ENCODE measurements at regions of chr2 and their contacts with region 1.

Region 1: DNA sequence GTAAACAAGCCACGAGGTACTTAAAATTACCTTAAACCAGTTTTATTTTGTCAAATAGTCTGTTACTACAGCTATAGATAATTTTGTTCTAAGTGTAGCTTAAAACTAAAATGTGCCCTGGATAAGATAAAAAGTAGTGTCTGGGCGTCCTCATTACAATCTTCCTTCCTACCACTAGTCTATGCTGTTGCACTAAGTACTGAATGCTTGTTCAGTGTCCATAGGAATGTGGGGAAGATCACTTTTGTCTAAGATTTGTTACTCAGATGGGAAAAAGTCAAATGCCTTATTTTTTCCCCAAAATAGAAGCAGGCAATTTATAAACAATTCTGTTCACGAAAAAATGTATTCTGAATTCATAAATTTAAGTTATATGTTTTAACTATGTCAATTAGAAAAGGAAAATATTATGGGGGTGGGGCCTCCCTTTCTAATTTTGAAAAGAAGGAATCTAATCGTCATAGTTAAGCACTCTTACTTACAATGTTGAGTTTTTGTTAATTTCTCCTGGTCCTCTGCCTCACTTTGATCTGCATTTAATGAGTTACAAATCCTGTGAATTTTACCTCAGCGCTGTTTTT is 140.4 kb upstream of the VRK2 start:
- DNase-seq: no peak
- ATAC-seq: peak; percentile 98
- H3K4me3 ChIP-seq: no peak overlapping the region
- H3K27ac ChIP-seq: no peak overlapping the region
- H3K4me1 ChIP-seq: no peaks in the 10 kb centered on the region
- H3K27me3 ChIP-seq: no peaks in the 10 kb centered on the region
- CTCF ChIP-seq: peak; percentile 81 to 92 (median 84)
- POLR2A ChIP-seq: no peak
- RAD21 ChIP-seq: peak; percentile 95

Region 2: GRCh38 chr2:57759822-57760300 is 146.4 kb before region 1 on chr2:
- CTCF ChIA-PET with region 1: interaction called, 5 read pairs
- POLR2A ChIA-PET with region 1: no interaction called
- RAD21 ChIA-PET with region 1: no interaction called
- intact Hi-C with region 1: loop called (anchors 5 kb)
- DNase-seq: peak; percentile 57
- ATAC-seq: peak; percentile 99
- H3K4me3 ChIP-seq: peak overlapping the region in 1 of 2 experiments; percentile 28; a peak in 2 of 4 replicates
- H3K27ac ChIP-seq: no peak overlapping the region
- H3K4me1 ChIP-seq: peaks cover 0 to 8% of the 10 kb centered on the region in 2 experiments; a peak in 2 of 4 replicates
- H3K27me3 ChIP-seq: no peaks in the 10 kb centered on the region
- CTCF ChIP-seq: peak; percentile 75 to 92 (median 87)
- POLR2A ChIP-seq: no peak
- RAD21 ChIP-seq: peak; percentile 96

Region 3: DNA sequence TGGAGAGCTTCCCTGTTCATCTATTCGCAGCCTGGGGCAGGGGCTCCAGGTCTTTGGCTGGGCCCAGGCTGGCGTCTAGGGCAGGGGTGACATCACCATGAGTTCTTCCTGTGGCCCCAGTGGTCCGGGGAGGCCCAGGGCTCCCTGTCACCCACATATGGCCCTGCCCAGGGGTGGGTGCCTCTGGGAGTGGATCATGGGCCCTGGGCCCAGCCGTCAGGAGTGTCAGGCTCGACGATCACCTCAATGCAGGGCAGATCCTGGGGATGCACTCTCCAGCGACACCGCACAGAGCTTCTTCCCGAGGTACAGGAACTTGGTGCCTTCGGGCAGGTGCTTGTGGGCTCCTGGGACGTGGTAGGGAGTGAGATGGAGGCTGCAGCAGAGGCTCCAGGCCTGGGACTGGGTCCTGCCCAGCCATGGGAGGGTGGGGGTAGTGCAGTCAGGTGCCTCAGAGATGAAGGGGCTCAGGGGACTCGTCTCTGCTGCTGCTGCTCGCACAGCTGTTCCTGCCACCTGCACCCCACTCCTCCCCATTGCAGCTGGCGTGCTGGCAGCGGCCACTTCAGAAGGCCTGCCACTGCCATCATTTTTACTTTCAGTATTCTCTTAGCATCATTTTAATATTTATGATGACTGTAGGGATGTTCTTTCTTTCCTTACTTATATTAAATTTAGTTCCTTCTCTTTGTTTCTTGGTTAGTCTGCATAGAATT is 55.7 kb before region 1 on chr2:
- CTCF ChIA-PET with region 1: no interaction called
- POLR2A ChIA-PET with region 1: no interaction called
- RAD21 ChIA-PET with region 1: no interaction called
- intact Hi-C with region 1: no loop called
- DNase-seq: no peak
- ATAC-seq: no peak
- H3K4me3 ChIP-seq: no peak overlapping the region
- H3K27ac ChIP-seq: no peak overlapping the region
- H3K4me1 ChIP-seq: no peaks in the 10 kb centered on the region
- H3K27me3 ChIP-seq: no peaks in the 10 kb centered on the region
- CTCF ChIP-seq: no peak
- POLR2A ChIP-seq: no peak
- RAD21 ChIP-seq: no peak

Region 4: DNA sequence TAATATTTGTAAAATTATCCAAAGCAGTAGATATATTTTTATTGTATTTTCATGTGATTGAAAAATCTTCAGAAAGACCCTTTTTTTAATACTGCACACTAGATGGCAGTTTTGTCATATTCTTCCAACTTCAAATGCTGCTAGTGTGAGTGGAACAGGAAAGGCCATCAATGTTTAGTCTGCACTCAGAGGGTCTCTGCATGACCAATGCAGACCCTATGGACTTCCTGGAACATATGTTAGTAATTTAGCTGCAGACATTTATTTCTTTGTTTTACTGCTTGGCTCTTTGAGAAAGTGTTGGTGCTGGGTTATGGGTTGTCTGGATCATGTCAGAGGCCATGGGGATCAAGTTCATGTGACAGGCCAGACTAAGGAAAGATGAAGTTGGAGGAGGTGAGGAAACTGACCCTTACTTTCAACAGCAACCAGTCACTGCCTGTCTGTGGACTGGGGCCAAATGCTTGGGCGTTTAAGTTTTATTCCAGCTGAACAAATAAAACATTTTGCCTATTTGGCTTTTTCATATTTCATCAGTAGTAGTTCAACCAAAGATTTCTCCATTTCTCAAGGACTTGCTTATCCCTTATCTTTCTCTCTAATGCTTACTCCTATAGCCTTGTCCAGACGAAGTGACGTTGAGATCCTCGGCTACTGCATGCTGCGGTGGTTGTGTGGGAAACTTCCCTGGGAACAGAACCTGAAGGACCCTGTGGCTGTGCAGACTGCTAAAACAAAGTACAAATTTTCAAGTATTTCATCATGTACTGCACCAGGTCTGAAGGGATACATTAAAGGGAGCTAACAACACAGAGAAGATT is 225.2 kb after region 1 on chr2:
- CTCF ChIA-PET with region 1: interaction called, 6 read pairs
- POLR2A ChIA-PET with region 1: no interaction called
- RAD21 ChIA-PET with region 1: no interaction called
- intact Hi-C with region 1: loop called (anchors 10 kb)
- DNase-seq: no peak
- ATAC-seq: no peak
- H3K4me3 ChIP-seq: no peak overlapping the region
- H3K27ac ChIP-seq: no peak overlapping the region
- H3K4me1 ChIP-seq: peaks cover 0 to 3% of the 10 kb centered on the region in 2 experiments; a peak in 1 of 4 replicates
- H3K27me3 ChIP-seq: no peaks in the 10 kb centered on the region
- CTCF ChIP-seq: peak in 2 of 3 experiments; percentile 31 to 36; a peak in 2 of 6 replicates
- POLR2A ChIP-seq: no peak
- RAD21 ChIP-seq: peak; percentile 65

Region 5: GRCh38 chr2:58553937-58554336 is 647.7 kb after region 1 on chr2:
- CTCF ChIA-PET with region 1: interaction called, 10 read pairs
- POLR2A ChIA-PET with region 1: no interaction called
- RAD21 ChIA-PET with region 1: no interaction called
- intact Hi-C with region 1: loop called (anchors 1 kb)
- DNase-seq: peak; percentile 7
- ATAC-seq: peak; percentile 72
- H3K4me3 ChIP-seq: no peak overlapping the region
- H3K27ac ChIP-seq: no peak overlapping the region
- H3K4me1 ChIP-seq: no peaks in the 10 kb centered on the region
- H3K27me3 ChIP-seq: no peaks in the 10 kb centered on the region
- CTCF ChIP-seq: peak; percentile 35 to 56 (median 53); a peak in 5 of 6 replicates
- POLR2A ChIP-seq: no peak
- RAD21 ChIP-seq: peak; percentile 54

Region 6: GRCh38 chr2:58866040-58866439 is 959.8 kb after region 1 on chr2:
- CTCF ChIA-PET with region 1: no interaction called
- POLR2A ChIA-PET with region 1: no interaction called
- RAD21 ChIA-PET with region 1: no interaction called
- intact Hi-C with region 1: loop called (anchors 5 kb)
- DNase-seq: no peak
- ATAC-seq: no peak
- H3K4me3 ChIP-seq: no peak overlapping the region
- H3K27ac ChIP-seq: no peak overlapping the region
- H3K4me1 ChIP-seq: no peaks in the 10 kb centered on the region
- H3K27me3 ChIP-seq: peaks cover 4% of the 10 kb centered on the region; the same call in 1 of the 2 replicates
- CTCF ChIP-seq: no peak
- POLR2A ChIP-seq: no peak
- RAD21 ChIP-seq: no peak

Measured in HCT116 (cell line).